OCI-LY7 (cell line): ENCODE measurements at regions of chr17 and their contacts with region 1.

Region 1: DNA sequence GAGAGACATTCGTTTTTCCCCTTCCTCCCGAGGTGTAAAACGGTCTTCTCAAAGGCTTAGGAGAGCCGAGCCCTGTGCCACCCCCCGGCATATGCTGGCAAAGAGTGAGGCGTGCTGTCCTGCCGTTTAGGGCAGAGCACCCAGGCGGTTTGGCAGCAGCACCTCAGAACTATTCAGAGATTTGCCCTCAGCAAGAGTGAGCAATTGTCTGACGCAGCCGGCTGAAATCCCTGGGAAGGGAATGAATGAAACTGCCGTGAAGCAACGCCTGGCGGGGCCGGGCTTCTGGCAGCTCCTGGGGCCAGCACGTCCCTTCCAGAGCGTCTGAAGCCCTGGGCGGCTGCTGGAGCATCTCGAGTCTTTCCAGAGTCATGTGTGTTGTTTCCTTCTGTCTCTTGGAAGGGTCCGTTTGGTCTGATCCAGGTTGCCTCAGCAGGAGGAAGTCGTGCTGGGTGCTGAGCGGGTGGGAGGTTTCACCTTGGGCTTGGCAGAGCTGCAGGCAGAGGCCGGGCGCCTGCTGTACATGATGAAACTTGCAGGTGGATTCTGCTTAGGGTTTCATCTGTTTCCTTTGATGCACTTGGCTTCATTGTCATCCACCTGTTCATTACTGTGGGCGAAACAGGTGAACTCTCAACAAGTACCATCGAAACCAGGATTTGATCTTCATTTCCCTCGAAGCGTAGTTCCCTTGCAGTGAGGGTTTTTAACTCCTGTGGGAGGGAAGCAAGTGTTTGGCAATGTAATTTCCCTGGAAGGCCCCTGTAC is 35.4 kb downstream of the TBCD start:
- DNase-seq: peak; percentile 97
- H3K4me3 ChIP-seq: peak overlapping the region; percentile 16
- H3K27ac ChIP-seq: peak overlapping the region; percentile 84
- H3K4me1 ChIP-seq: peaks cover 39% of the 10 kb centered on the region
- CTCF ChIP-seq: no peak

Region 2: DNA sequence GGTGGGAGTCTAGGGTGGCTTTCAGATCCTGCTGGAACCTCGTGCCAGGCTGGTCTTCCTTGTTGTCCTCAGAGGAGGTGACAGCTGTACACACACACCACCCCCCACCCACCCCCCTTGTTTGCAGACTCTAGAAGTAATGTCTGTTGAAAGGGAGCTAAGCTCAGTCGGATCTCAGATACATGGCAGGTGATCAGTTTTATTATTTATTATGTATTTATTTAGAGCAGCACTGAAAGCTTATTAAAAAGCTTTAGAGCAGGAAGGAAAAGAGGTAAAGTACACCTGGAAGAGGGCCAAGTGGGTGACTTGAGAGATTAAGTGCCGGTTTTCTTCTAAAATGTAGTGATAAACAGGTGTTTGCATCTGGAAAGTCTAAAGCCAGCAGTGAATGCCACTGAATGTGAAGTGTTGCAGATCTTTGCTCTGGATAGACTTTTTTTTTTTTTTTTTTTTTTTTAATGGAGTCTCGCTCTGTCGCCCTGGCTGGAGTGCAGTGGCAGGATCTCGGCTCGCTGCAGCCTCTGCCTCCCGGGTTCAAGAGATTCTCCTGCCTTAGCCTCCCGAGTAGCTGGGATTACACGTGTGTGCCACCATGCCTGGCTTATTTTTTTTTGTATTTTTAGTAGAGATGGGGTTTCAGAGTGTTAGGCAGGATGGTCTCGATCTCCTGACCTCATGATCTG is 227.6 kb before region 1 on chr17:
- CTCF ChIA-PET with region 1: no interaction called
- POLR2A ChIA-PET with region 1: no interaction called
- intact Hi-C with region 1: no loop called
- DNase-seq: no peak
- H3K4me3 ChIP-seq: no peak overlapping the region
- H3K27ac ChIP-seq: no peak overlapping the region
- H3K4me1 ChIP-seq: peaks cover 7% of the 10 kb centered on the region
- CTCF ChIP-seq: no peak

Region 3: GRCh38 chr17:82804442-82805191 is 17.4 kb after region 1 on chr17:
- CTCF ChIA-PET with region 1: no interaction called
- POLR2A ChIA-PET with region 1: no interaction called
- intact Hi-C with region 1: no loop called
- DNase-seq: no peak
- H3K4me3 ChIP-seq: no peak overlapping the region
- H3K27ac ChIP-seq: no peak overlapping the region
- H3K4me1 ChIP-seq: no peaks in the 10 kb centered on the region
- CTCF ChIP-seq: no peak

Region 4: GRCh38 chr17:82863941-82864774 is 76.9 kb after region 1 on chr17:
- CTCF ChIA-PET with region 1: no interaction called
- POLR2A ChIA-PET with region 1: interaction called, 3 read pairs
- intact Hi-C with region 1: loop called (anchors 1 kb)
- DNase-seq: peak; percentile 75
- H3K4me3 ChIP-seq: peak overlapping the region; percentile 7
- H3K27ac ChIP-seq: peak overlapping the region; percentile 52
- H3K4me1 ChIP-seq: peaks cover 93% of the 10 kb centered on the region
- CTCF ChIP-seq: no peak

Region 5: GRCh38 chr17:82871056-82871903 is 84.0 kb after region 1 on chr17:
- CTCF ChIA-PET with region 1: no interaction called
- POLR2A ChIA-PET with region 1: no interaction called
- intact Hi-C with region 1: loop called (anchors 1 kb)
- DNase-seq: peak; percentile 99
- H3K4me3 ChIP-seq: peak overlapping the region; percentile 51
- H3K27ac ChIP-seq: peak overlapping the region; percentile 95
- H3K4me1 ChIP-seq: peaks cover 76% of the 10 kb centered on the region
- CTCF ChIP-seq: peak; percentile 83

Region 6: GRCh38 chr17:82974136-82974952 is 187.1 kb after region 1 on chr17:
- CTCF ChIA-PET with region 1: no interaction called
- POLR2A ChIA-PET with region 1: no interaction called
- intact Hi-C with region 1: loop called (anchors 1 kb)
- DNase-seq: no peak
- H3K4me3 ChIP-seq: no peak overlapping the region
- H3K27ac ChIP-seq: no peak overlapping the region
- H3K4me1 ChIP-seq: peaks cover 40% of the 10 kb centered on the region
- CTCF ChIP-seq: no peak

Region 7: GRCh38 chr17:83051395-83052233 is 264.3 kb after region 1 on chr17:
- CTCF ChIA-PET with region 1: no interaction called
- POLR2A ChIA-PET with region 1: no interaction called
- intact Hi-C with region 1: loop called (anchors 1 kb)
- DNase-seq: peak; percentile 99
- H3K4me3 ChIP-seq: peak overlapping the region; percentile 74
- H3K27ac ChIP-seq: peak overlapping the region; percentile 75
- H3K4me1 ChIP-seq: peaks cover 31% of the 10 kb centered on the region
- CTCF ChIP-seq: no peak

Region 8: DNA sequence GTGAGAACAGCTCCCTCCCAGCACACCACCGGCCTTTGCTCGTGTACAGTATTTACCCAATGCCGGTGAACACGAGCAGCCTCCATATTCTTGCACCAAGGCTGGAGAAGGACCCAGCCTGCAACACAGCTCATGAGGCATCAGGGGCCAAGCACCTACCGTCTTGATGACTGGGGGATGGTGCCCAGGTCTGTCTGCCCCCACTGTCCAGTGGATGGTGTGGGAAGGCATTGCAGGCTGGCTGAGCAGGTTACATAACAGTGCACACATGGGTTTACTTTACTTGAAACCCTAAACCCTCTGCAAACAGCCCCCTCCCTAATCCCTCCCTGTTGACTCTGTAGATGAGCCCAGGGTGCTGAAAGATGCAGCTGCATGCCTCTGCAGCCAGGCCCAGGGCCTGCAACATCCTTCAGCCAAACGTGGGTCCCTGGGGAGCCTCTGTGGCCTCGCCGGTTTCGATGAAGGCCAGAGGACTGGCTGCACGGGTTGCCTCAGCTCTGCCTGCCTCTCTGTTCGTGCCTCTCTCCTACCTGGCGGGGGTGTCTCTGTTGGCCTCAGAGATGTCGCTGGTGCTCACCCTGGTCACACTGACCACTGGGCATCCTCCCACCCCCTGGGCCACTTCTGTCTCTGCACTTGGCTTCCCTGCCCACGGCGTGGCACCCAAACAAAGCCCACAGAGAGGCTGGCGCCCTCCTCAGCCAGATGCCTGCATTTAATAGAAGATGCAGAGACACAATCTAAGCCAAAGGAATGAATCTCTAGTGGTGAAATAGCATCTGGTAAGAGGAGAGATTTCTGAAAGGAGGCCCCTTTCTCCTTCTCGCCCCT is 387.2 kb after region 1 on chr17:
- CTCF ChIA-PET with region 1: no interaction called
- POLR2A ChIA-PET with region 1: no interaction called
- intact Hi-C with region 1: loop called (anchors 1 kb)
- DNase-seq: peak; percentile 90
- H3K4me3 ChIP-seq: peak overlapping the region; percentile 3
- H3K27ac ChIP-seq: peak overlapping the region; percentile 41
- H3K4me1 ChIP-seq: peaks cover 25% of the 10 kb centered on the region
- CTCF ChIP-seq: peak; percentile 75